PC-3 (cell line): ENCODE measurements at regions of chr20 and their contacts with region 1.

Region 1: DNA sequence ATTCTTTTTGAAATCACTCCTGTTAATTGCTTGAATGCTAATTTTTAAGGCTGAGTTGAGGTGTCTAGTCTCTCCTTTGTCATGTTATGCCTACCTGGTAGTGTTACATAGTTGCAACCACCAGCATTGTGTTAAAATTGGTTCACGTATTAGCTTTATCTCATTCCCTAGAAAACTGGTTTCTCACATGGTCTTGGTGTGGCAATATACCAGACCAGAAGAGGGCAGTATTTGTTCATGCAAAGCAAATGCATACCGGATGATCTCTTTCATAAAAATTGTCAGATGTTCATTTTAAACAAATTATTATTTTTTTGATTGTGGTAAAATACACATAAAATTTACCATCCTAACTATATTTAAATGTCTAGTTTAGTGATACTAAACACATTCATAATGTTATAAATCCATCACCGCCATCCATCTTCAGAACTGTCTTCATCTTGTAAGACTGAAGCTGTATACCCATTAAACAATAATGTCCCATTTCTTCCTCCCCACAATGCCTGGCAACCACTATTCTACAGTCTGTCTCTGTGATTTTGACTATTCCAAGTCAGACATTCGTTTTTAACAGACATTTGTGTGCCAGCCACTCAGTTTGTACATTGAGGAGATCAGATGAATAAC is 92.8 kb downstream of the ATRN start:
- DNase-seq: peak; percentile 73
- ATAC-seq: peak; percentile 58
- H3K4me3 ChIP-seq: no peak overlapping the region
- H3K27ac ChIP-seq: no peak overlapping the region
- H3K4me1 ChIP-seq: peaks cover 16% of the 10 kb centered on the region
- H3K27me3 ChIP-seq: no peaks in the 10 kb centered on the region
- CTCF ChIP-seq: peak; percentile 96

Region 2: GRCh38 chr20:3595541-3595940 is 31.9 kb after region 1 on chr20:
- CTCF ChIA-PET with region 1: interaction called, 15 read pairs
- POLR2A ChIA-PET with region 1: no interaction called
- intact Hi-C with region 1: no loop called
- DNase-seq: no peak
- ATAC-seq: peak; percentile 43; the same call in 1 of the 2 replicates
- H3K4me3 ChIP-seq: no peak overlapping the region
- H3K27ac ChIP-seq: no peak overlapping the region
- H3K4me1 ChIP-seq: no peaks in the 10 kb centered on the region
- H3K27me3 ChIP-seq: no peaks in the 10 kb centered on the region
- CTCF ChIP-seq: no peak

Region 3: DNA sequence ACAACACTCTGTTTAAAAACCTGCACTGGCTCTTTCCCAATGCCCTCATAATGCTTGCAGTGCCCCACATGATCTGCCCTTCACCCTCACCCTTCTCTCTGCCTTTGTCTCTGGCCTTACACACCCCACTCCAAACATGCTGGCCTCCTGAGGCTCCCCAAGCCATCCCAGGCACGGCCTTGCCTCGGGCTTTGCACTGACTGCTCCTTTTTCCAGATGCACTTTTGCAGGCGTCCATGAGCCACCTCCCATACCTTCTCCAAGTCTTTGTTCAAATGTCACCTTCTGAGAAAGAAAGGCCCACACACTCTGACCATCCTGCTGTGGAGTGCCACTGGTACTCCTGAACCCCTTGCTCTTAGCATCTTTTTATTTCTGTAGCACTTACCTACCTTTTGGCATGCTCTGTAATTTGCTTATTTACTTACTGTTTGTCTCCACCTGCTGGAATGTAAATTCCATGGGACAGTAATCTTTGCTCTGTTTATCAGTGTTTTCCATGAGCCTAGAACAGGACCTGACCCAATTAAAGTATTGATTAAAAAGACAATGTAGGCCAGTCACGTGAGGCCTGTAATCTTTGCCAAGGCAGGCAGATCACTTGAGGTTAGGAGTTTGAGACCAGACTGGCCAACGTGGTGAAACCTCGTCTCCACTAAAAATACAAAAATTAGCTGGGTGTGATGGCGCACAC is 68.8 kb after region 1 on chr20:
- CTCF ChIA-PET with region 1: no interaction called
- POLR2A ChIA-PET with region 1: no interaction called
- intact Hi-C with region 1: loop called (anchors 1 kb)
- DNase-seq: peak; percentile 32
- ATAC-seq: peak; percentile 29; the same call in 1 of the 2 replicates
- H3K4me3 ChIP-seq: no peak overlapping the region
- H3K27ac ChIP-seq: no peak overlapping the region
- H3K4me1 ChIP-seq: no peaks in the 10 kb centered on the region
- H3K27me3 ChIP-seq: no peaks in the 10 kb centered on the region
- CTCF ChIP-seq: peak; percentile 60